Activated CD4-positive, alpha-beta T cell treated with anti-CD3 and anti-CD28 coated beads for 36 hours (primary cell): ENCODE measurements at regions of chr11 and their contacts with region 1.

Region 1: DNA sequence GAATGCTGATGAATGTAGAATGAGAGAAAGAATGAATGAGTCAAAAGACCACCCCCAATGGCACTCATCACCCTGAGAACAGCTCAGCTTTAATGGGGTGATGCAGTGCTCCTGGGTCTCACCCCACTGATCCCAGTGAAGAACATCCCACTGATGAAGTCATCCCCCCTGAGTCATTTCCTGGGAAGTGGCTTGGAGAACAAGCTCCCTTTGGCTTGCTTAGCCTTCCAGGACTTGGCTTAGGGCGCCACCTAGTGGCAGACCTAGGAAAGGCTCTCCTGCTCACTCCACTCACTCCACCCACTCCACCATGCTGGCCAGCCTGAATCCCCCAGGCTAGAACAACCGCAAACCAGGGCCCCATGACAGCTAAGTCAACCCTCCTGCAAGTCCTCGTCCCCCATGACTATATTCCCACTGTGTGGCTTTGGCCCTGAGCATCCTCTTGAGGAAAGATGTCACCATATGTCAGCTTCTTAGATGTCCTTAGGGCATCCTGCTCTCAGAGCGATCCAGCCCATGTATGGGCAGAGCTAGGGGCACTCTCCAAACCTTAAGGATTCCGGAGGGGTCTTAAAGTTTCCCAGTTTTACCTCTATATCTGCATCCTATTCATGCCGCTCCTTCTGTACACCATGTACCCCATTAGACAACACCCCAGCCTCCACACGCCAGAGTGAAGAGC is 17.8 kb upstream of the TMPRSS13 start:
- DNase-seq: peak; percentile 92
- ATAC-seq: peak; percentile 59
- H3K4me3 Mint-ChIP-seq: no peak overlapping the region
- H3K27ac Mint-ChIP-seq: peak overlapping the region; percentile 68
- H3K4me1 Mint-ChIP-seq: peaks cover 79% of the 10 kb centered on the region
- H3K27me3 Mint-ChIP-seq: no peaks in the 10 kb centered on the region

Region 2: DNA sequence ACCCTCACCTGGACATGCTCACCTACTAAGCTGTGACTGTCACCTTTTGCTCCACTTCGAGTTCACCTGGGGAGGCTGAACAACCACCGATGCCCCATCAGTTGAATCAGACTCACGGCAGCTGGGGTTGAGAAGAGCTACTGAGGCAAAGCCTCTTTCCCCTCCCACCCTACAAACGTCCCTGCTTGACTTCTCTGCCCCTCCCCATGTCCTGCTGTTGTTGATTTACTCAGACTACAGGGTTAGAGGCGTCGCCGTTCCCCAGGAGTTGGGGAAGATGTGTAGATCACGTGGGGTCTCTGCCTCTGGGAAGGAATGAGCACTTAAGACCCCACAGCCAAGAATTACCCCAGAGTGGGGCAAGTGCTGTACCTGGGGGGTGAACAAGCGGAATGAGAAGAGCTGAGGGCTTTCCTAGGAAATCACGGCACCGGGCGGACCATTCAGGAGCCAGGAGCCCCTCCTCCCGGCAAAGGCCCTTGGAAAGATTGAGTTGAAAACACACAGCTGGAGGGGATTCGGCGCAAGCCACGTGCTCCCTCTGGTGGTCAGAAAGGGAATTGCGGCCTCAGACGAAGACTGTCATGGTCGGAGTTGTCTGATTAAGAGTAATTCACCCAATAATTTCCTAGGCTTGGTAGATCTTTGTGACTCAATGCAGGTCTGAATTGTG is 129.5 kb before region 1 on chr11:
- CTCF ChIA-PET with region 1: interaction called, 21 read pairs
- POLR2A ChIA-PET with region 1: interaction called, 3 read pairs
- intact Hi-C with region 1: loop called (anchors 1 to 2 kb)
- DNase-seq: peak; percentile 95
- ATAC-seq: peak; percentile 45
- H3K4me3 Mint-ChIP-seq: peak overlapping the region; percentile 49
- H3K27ac Mint-ChIP-seq: peak overlapping the region; percentile 99
- H3K4me1 Mint-ChIP-seq: peaks cover 59% of the 10 kb centered on the region
- H3K27me3 Mint-ChIP-seq: no peaks in the 10 kb centered on the region

Region 3: GRCh38 chr11:117903505-117904392 is 43.2 kb before region 1 on chr11:
- CTCF ChIA-PET with region 1: interaction called, 11 read pairs
- POLR2A ChIA-PET with region 1: interaction called, 5 read pairs
- intact Hi-C with region 1: no loop called
- DNase-seq: no peak
- ATAC-seq: no peak
- H3K4me3 Mint-ChIP-seq: no peak overlapping the region
- H3K27ac Mint-ChIP-seq: no peak overlapping the region
- H3K4me1 Mint-ChIP-seq: peaks cover 10% of the 10 kb centered on the region
- H3K27me3 Mint-ChIP-seq: no peaks in the 10 kb centered on the region

Region 4: DNA sequence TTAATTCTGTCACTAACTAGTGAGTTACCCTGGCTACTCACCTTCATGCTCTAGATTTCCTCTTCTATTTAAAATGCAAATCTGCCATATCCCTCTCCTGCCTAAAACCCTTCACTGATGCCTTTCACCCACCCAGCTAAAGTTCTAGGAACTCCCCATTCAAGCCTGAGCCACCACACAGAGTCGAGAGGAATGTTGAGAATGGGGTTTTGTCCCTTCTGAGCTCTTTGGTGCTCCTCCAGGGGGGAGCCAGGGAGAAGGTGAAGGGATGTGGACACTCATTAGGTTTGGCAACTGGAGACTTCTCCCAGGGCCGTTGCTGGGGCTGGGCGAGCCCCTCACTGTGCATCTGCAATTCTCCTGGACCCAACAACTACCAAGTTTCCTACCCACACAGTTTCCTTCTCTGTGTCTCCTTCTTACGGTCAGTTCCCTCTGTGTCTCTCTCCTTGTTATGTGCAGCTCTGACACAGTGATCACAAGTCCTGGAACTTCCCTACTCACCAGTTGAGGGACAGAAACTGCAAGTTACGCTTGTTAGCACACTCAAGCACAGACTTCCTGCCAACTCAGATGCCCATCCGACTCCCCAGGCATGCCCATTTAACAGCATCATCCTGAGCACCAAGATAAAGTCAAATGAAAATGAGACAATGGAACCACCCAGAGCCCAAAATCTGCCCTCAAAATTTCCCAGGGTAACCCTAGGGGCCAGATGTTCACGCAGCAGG is 32.7 kb after region 1 on chr11:
- CTCF ChIA-PET with region 1: interaction called, 43 read pairs
- POLR2A ChIA-PET with region 1: interaction called, 3 read pairs
- intact Hi-C with region 1: no loop called
- DNase-seq: peak; percentile 55
- ATAC-seq: peak; percentile 69
- H3K4me3 Mint-ChIP-seq: no peak overlapping the region
- H3K27ac Mint-ChIP-seq: peak overlapping the region; percentile 90
- H3K4me1 Mint-ChIP-seq: peaks cover 79% of the 10 kb centered on the region
- H3K27me3 Mint-ChIP-seq: no peaks in the 10 kb centered on the region

Region 5: DNA sequence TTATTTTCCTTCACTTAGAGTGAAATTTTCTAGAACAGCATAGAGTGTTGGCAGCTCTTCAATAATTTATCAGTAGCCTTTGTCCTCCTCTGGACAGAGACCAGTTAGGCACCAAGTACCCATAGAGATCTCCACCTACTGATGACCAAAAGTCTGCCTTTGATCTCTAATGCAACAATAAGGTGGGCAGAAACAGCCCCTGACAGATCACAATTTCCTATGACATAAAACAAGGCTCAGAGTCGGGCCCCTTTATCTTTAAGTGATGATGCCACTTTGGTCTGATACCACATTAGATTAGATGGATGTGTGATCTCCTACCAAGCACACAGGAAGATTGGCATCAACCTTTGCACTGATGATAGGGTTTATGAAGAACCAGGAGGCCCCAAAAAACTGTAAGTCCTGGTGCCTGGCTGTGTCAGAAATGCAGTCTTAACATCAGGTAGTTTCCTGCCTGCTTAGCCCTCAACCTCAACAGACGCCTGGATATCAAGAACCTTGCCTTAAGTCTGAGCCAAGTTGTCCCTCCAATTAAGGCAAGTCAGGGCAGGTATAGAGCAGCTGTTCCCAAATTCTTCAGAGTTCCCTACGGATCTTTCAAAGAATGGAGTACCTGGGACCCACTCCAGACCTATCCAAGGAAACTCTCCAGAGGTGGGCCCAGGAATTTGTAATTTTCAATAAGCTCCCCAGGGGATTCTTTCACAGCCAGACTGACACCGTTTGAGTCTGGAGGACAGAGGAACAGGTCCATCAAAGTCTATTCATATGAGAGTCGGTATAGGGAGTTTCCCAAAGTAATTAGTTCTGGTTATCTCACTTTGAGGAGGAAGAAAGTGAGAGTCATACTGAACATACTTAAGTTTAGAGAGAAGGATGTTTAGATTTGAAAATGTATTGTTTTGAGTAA is 99.3 kb after region 1 on chr11:
- CTCF ChIA-PET with region 1: interaction called, 211 read pairs
- POLR2A ChIA-PET with region 1: interaction called, 3 read pairs
- intact Hi-C with region 1: no loop called
- DNase-seq: peak; percentile 49
- ATAC-seq: peak; percentile 76
- H3K4me3 Mint-ChIP-seq: peak overlapping the region; percentile 25
- H3K27ac Mint-ChIP-seq: peak overlapping the region; percentile 76
- H3K4me1 Mint-ChIP-seq: peaks cover 88% of the 10 kb centered on the region
- H3K27me3 Mint-ChIP-seq: no peaks in the 10 kb centered on the region

Region 6: GRCh38 chr11:118306556-118306955 is 359.6 kb after region 1 on chr11:
- CTCF ChIA-PET with region 1: no interaction called
- POLR2A ChIA-PET with region 1: no interaction called
- intact Hi-C with region 1: no loop called
- DNase-seq: peak; percentile 77
- ATAC-seq: peak; percentile 42
- H3K4me3 Mint-ChIP-seq: peak overlapping the region; percentile 99
- H3K27ac Mint-ChIP-seq: peak overlapping the region; percentile 99
- H3K4me1 Mint-ChIP-seq: peaks cover 80% of the 10 kb centered on the region
- H3K27me3 Mint-ChIP-seq: no peaks in the 10 kb centered on the region